ENCODE measurements at regions of chr6 and their contacts with region 1.

Region 1: DNA sequence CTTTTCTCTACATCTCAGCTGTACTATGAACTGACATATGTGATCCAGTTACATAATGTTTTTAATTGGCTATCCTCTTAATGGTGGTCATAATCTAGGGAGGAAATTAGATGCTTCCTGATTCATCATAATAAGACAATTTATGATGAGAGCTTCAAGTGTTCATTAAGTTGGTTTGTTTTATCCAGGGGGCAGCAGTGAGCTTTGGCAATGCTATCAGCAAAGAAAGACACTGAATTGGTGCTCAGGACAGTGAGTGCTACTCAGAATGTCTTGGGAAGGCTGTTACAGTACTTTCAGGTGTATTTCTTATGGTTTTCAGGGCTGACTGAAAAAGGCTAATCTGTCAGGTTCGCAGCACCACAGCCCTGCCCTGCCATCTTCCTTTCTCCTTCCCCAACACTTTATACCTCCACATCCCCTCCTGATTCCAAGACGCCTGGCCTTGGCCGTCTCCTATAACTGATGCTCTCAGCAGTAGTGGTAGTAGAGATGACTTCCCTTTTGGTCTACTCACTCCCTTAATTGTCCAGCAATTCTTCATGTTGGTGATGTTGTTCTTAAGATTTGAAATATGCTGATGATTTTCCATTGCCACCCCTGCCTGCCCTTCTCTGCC is 67.0 kb upstream of the TNFAIP3 start:
- DNase-seq: peak; percentile 54
- ATAC-seq: peak; percentile 88
- H3K4me3 ChIP-seq: no peak overlapping the region
- H3K27ac ChIP-seq: no peak overlapping the region
- H3K4me1 ChIP-seq: no peaks in the 10 kb centered on the region
- H3K27me3 ChIP-seq: no peaks in the 10 kb centered on the region
- CTCF ChIP-seq: peak; percentile 73 to 82 (median 80)
- POLR2A ChIP-seq: no peak
- RAD21 ChIP-seq: peak; percentile 83

Region 2: GRCh38 chr6:137811121-137811915 is 11.3 kb after region 1 on chr6:
- CTCF ChIA-PET with region 1: interaction called, 10 read pairs
- POLR2A ChIA-PET with region 1: no interaction called
- RAD21 ChIA-PET with region 1: no interaction called
- intact Hi-C with region 1: no loop called
- DNase-seq: peak; percentile 55
- ATAC-seq: peak; percentile 98
- H3K4me3 ChIP-seq: peak overlapping the region; percentile 21 to 26
- H3K27ac ChIP-seq: no peak overlapping the region
- H3K4me1 ChIP-seq: peaks cover 8 to 41% of the 10 kb centered on the region in 2 experiments; a peak in 3 of 4 replicates
- H3K27me3 ChIP-seq: no peaks in the 10 kb centered on the region
- CTCF ChIP-seq: no peak
- POLR2A ChIP-seq: no peak
- RAD21 ChIP-seq: no peak

Region 3: DNA sequence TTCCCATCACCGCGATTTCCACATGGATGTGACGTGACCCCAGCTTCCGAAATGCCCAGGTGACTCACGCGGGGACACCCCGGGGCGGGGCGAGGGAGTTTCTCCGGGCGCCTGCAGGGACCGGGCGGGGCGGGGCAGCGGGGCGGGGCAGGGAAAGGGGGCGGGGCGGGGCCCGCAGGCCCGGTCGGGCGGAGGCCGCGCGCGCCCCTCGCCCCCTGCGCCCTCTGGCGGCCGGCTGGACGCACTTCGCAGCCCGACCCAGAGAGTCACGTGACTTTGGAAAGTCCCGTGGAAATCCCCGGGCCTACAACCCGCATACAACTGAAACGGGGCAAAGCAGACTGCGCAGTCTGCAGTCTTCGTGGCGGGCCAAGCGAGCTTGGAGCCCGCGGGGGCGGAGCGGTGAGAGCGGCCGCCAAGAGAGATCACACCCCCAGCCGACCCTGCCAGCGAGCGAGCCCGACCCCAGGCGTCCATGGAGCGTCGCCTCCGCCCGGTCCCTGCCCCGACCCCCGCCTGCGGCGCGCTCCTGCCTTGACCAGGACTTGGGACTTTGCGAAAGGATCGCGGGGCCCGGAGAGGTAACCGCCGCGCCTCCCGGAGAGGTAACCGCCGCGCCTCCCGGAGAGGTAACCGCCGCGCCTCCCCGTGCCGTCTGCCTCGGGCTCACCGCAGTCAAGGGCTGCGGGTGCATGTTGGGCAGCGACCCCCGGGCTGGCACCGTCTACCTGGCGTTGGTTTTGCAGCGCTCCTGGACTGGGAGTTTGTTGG is 67.0 kb after region 1 on chr6 and contains the start of gene TNFAIP3:
- CTCF ChIA-PET with region 1: interaction called, 6 read pairs
- POLR2A ChIA-PET with region 1: no interaction called
- RAD21 ChIA-PET with region 1: interaction called in 1 of 2 experiments, 3 read pairs
- intact Hi-C with region 1: loop called (anchors 2 kb)
- DNase-seq: peak; percentile 74
- ATAC-seq: peak; percentile 89
- H3K4me3 ChIP-seq: peak within 1 kb of the TSS; percentile 63 to 69
- H3K27ac ChIP-seq: peak within 1 kb of the TSS; percentile 57; the same call in 1 of the 2 replicates
- H3K4me1 ChIP-seq: peaks cover 10 to 26% of the 10 kb centered on the region in 2 experiments; a peak in 3 of 4 replicates
- H3K27me3 ChIP-seq: no peaks in the 10 kb centered on the region
- CTCF ChIP-seq: peak; percentile 52 to 69 (median 58); a peak in 5 of 6 replicates
- POLR2A ChIP-seq: no peak
- RAD21 ChIP-seq: peak; percentile 71
- total RNA-seq, gene TNFAIP3: 4.4 TPM

Region 4: DNA sequence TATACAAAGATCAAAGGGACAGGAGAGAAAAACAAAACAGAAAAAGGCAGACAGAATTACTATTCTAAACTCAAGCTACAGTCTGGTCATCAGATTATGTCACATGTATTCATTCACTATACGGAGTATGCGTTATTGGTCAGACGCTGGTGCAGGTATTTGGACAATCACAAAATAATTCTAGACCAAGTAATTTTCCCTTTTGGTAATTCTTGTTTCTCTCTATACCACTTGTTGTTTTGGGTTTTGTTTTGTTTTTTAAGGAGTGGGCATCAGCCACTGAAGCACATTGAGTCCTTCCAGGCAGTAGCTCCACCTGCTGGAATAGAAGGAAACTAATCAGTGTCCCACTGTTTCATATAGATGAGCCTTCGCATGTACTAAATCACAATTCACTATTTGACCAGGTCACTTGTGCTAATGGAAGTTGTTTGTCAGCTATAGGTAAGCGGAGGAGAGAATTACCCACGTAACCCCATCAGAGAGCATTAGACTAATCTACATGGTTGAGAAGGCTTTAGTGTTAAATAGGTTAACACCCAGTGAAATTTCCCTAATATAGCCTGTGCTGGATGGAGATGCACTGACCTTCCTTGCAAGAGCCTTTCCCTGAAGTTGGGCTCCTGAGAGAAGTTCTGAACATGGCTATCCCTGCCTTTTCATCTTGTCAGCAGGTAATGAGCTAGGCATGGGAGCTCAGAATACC is 144.9 kb after region 1 on chr6:
- CTCF ChIA-PET with region 1: interaction called, 4 read pairs
- POLR2A ChIA-PET with region 1: no interaction called
- RAD21 ChIA-PET with region 1: no interaction called
- intact Hi-C with region 1: loop called (anchors 2 kb)
- DNase-seq: peak; percentile 19
- ATAC-seq: peak; percentile 95
- H3K4me3 ChIP-seq: no peak overlapping the region
- H3K27ac ChIP-seq: no peak overlapping the region
- H3K4me1 ChIP-seq: no peaks in the 10 kb centered on the region
- H3K27me3 ChIP-seq: no peaks in the 10 kb centered on the region
- CTCF ChIP-seq: peak; percentile 75 to 79 (median 78)
- POLR2A ChIP-seq: no peak
- RAD21 ChIP-seq: peak; percentile 77

Region 5: GRCh38 chr6:138194287-138194686 is 394.2 kb after region 1 on chr6:
- CTCF ChIA-PET with region 1: no interaction called
- POLR2A ChIA-PET with region 1: no interaction called
- RAD21 ChIA-PET with region 1: no interaction called
- intact Hi-C with region 1: no loop called
- DNase-seq: no peak
- ATAC-seq: no peak
- H3K4me3 ChIP-seq: no peak overlapping the region
- H3K27ac ChIP-seq: no peak overlapping the region
- H3K4me1 ChIP-seq: no peaks in the 10 kb centered on the region
- H3K27me3 ChIP-seq: no peaks in the 10 kb centered on the region
- CTCF ChIP-seq: no peak
- POLR2A ChIP-seq: no peak
- RAD21 ChIP-seq: no peak

Measured in HCT116 (cell line).